Mammary epithelial cell (primary cell): ENCODE measurements at regions of chr13 and their contacts with region 1.

Region 1: DNA sequence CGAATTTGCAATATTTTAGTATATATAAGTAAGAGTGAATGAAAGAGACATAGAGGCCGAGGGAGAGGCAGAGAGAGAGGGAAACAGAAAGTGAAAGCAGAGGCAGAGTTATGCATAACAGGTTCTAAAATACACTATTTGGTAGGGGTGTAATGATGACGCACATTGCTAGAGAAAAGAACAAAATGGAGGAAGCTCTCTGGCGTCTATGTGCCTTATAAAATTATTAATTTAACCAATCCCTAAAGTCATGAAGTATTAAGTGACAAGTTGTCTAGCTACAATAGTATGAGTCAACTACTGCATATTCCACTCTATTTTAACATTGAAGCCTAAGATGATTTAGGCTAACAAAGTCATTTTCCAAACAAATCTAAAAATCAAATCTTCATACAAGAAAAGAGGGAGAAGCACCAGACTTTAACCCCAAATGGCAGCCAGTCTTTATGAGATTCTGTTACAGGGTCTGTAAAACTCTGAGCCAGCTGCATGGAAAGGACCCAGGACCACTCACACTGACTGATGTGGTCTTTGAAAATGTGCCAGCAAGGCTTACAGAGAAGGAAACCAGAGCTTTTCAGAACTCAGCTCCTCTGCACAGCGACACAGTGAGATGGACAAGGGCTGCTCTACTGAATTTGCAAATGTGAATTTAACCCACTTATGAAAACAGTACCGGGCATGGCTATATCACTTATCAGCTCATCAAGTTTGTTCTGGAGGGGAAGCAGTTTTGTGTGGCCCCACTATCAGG is 99.0 kb upstream of the SERP2 start:
- DNase-seq: no peak
- H3K4me3 ChIP-seq: no peak overlapping the region
- H3K27ac ChIP-seq: no peak overlapping the region
- H3K4me1 ChIP-seq: no peaks in the 10 kb centered on the region
- H3K27me3 ChIP-seq: no peaks in the 10 kb centered on the region
- CTCF ChIP-seq: no peak

Region 2: DNA sequence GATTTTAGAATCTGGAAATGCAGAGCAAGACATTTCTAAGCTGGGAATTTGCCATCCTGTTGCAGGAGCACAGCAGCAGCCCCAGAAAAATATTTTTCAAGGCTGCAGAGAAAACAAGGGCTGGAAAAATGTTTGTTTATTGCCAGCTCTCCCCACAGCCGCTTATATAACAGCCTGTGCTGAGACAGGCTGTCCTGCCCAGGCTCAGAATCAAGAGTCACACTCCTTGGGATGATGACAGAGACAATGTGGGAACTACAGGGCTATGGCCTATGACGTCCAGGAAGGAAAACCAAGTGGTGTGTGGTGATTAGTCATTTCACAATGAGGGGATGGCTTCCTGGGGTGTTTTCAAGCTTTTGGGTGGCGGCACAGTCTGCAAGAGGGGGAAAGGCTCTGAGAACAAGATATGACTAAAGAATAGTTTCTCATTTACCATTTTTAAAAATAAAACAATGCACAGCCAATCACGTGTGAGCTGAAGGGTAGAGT is 37.3 kb before region 1 on chr13:
- CTCF ChIA-PET with region 1: no interaction called
- dilution Hi-C with region 1: loop called (anchors 5 kb)
- in situ Hi-C with region 1: no loop called
- intact Hi-C with region 1: no loop called
- DNase-seq: peak; percentile 89
- H3K4me3 ChIP-seq: no peak overlapping the region
- H3K27ac ChIP-seq: peak overlapping the region; percentile 35
- H3K4me1 ChIP-seq: peaks cover 22% of the 10 kb centered on the region
- H3K27me3 ChIP-seq: no peaks in the 10 kb centered on the region
- CTCF ChIP-seq: no peak

Region 3: DNA sequence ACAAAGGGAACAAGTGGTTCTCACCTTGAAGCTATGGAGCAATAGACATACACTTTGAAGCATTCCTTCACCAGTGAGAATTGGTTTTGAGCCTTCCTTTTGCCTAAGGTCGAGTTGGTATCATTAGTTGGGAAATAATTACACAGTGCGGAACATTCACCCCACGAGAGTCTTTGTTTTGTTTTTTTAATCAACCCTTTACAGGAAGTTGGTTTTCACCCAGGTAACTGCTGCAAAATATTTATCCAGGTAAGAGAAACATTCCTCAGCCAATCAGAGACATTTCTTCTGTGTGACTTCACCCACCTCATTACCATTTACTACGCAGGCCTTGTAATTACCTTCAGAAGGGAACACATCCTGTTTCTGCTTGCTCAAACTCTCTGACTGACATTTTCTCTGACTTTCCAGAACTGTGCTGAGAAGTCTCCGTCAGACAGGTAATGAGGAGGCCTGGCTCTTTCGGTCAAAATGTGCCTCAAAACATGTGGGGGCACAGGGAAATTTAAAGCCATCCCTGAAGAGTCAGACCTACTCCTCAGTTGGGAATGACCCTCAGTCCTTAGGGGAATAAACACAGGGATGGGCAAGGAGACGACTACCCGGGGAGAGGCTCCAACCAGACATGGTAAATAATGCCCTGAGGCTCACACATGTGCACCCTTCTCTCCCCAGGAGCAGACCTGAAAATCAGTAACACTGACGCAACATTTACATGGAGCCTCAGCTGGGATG is 76.3 kb after region 1 on chr13:
- CTCF ChIA-PET with region 1: no interaction called
- dilution Hi-C with region 1: no loop called
- in situ Hi-C with region 1: no loop called
- intact Hi-C with region 1: no loop called
- DNase-seq: no peak
- H3K4me3 ChIP-seq: no peak overlapping the region
- H3K27ac ChIP-seq: no peak overlapping the region
- H3K4me1 ChIP-seq: peaks cover 8% of the 10 kb centered on the region
- H3K27me3 ChIP-seq: no peaks in the 10 kb centered on the region
- CTCF ChIP-seq: no peak